Heart left ventricle (tissue), 16 donors: ENCODE measurements at regions of chr14 and their contacts with region 1.

Region 1: DNA sequence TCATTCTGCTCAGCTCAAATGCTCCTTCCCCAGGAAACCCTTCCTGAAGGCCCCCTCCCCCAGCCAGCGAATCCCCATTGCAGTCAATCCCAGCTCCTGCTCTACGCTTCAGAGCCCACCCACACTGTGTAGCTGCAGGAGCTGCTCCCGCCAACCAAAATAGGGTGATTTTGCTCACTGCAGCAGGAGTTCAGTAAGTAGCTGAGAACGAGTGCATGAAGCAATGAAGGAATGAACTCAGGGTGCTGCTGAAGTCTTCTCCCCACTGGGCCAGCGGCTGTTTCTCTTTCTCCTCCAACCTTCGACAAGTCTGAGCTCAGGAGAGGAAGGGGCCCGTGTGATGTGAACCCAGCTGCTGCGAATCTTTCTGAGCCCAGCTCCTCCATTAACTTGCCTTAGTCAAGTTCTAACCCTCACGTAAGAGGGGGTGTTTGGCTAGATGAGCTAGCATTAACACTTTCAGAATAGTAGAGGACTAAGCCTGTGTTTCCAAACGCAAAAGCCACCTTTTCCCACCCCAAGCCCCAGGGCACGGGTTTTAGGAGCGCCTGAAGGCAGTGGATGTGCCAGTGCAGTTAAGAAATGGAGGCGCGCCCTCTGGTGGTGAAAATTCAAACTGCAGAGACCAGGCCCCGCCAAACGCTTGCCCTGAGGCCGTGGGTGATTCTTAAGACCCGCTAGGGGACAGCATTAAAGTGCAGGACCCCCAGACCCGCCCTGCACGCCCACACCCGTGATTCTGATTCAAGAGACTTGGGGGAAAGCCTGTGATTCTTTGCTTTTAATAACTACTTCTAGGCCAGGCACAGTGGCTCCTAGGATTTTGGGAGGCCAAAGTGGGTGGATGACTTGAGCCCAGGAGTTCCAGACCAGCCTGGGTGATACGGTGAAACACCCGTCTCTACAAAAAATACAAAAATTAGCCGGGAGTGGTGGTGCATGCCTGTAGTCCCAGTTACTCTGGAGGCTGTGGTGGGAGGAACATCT is 11.9 kb upstream of the SERPINA4 start:
- DNase-seq: peak in 4 of 5 donors; percentile 29 to 76 (median 44)
- ATAC-seq: peak in 3 of 4 donors; percentile 60 to 80 (median 75)
- H3K4me3 ChIP-seq: no peak overlapping the region
- H3K27ac ChIP-seq: no peak overlapping the region
- H3K4me1 ChIP-seq: no peaks in the 10 kb centered on the region
- H3K27me3 ChIP-seq: peaks cover 0 to 29% (median 6%) of the 10 kb centered on the region in 9 donors
- CTCF ChIP-seq: peak; percentile 60 to 95 (median 86)
- POLR2A ChIP-seq: no peak

Region 2: DNA sequence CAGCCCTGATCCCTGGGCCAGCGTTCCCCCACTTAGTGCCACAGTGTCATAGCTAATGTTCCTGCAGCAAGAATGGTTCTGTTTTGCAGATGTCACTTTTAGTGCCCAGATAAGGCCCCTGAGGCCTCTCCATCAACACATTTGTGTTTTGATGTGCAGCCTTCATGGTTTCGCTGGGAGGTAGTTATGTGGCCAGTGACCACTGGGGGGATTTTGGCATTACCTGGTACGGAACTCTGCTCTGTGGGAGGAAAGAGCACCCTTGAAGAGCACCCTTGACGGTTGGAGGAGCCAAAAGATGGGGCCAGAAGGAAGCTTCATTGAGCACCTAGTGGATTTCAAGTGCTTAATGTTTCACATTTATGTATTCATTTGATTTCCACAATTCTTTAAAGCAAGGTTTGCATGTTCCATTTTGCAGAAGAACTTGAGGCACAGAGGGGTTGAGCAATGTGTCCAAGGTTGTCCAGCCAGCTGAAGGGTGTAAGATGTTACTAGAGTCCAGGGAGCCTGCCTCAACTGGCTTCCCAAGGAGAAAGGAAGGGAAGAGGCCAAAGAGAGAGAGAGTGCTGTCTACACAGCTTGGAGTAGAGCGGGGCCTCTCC is 109.7 kb before region 1 on chr14:
- intact Hi-C with region 1: loop called in 1 of 10 experiments (anchors 10 kb)
- DNase-seq: no peak
- ATAC-seq: no peak
- H3K4me3 ChIP-seq: no peak overlapping the region
- H3K27ac ChIP-seq: no peak overlapping the region
- H3K4me1 ChIP-seq: no peaks in the 10 kb centered on the region
- H3K27me3 ChIP-seq: peaks cover 0 to 29% (median 7%) of the 10 kb centered on the region in 9 donors
- CTCF ChIP-seq: no peak
- POLR2A ChIP-seq: no peak